CD8-positive, alpha-beta T cell (primary cell): ENCODE measurements at regions of chr1 and their contacts with region 1.

Region 1: GRCh38 chr1:32876341-32877210 is 5.9 kb upstream of the FNDC5 start:
- DNase-seq: peak in 6 of 9 experiments; percentile 25 to 74 (median 68)
- ATAC-seq: peak; percentile 81
- H3K4me3 ChIP-seq: no peak overlapping the region
- H3K4me3 Mint-ChIP-seq: no peak overlapping the region
- H3K27ac ChIP-seq: no peak overlapping the region
- H3K27ac Mint-ChIP-seq: no peak overlapping the region
- H3K4me1 ChIP-seq: no peaks in the 10 kb centered on the region
- H3K4me1 Mint-ChIP-seq: peaks cover 9% of the 10 kb centered on the region
- H3K27me3 ChIP-seq: peaks cover 5 to 21% of the 10 kb centered on the region in 2 experiments
- H3K27me3 Mint-ChIP-seq: peaks cover 47% of the 10 kb centered on the region
- CTCF ChIP-seq: peak; percentile 61

Region 2: DNA sequence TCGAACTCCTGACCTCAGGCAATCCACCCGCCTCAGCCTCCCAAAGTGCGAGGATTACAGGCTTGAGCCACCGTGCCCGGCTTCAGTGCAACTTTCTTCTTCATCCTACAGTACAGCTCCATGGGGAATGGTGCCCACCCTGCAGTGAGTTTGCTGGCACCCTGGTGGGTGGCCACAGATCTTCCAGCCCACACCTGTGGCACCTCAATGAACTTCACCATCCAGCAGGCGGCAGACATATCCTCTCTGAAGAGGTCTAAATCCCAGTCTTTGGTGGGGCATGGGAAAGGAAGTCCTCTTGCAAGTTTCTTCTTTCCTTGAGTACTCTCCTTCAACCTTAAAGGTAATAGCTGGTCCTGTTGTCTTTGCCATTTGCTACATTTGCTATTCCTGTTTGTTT is 355.4 kb before region 1 on chr1:
- CTCF ChIA-PET with region 1: interaction called, 8 read pairs
- POLR2A ChIA-PET with region 1: no interaction called
- intact Hi-C with region 1: loop called in 1 of 2 experiments (anchors 1 kb)
- DNase-seq: no peak
- ATAC-seq: no peak
- H3K4me3 ChIP-seq: no peak overlapping the region
- H3K4me3 Mint-ChIP-seq: peak overlapping the region; percentile 78
- H3K27ac ChIP-seq: no peak overlapping the region
- H3K27ac Mint-ChIP-seq: no peak overlapping the region
- H3K4me1 ChIP-seq: no peaks in the 10 kb centered on the region
- H3K4me1 Mint-ChIP-seq: peaks cover 7% of the 10 kb centered on the region
- H3K27me3 ChIP-seq: peaks cover 0 to 3% of the 10 kb centered on the region in 2 experiments
- H3K27me3 Mint-ChIP-seq: peaks cover 7% of the 10 kb centered on the region
- CTCF ChIP-seq: no peak

Region 3: DNA sequence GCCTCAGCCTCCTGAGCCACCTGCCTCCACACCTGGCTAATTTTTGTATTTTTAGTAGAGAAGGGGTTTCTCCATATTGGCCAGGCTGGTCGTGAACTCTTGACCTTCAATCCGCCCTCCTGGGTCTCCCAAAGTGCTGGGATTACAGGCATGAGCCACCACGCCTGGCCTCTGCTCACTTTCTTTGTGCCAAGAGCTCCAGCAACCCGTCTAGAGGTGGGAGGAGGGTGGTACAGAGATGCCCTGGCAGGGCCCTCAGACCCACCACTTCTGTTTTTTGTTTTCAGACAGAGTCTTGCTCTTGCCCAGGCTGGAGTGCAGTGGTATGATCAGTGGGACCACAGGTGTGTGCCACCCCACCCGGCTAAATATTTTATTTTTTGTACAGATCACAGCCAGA is 167.1 kb before region 1 on chr1:
- CTCF ChIA-PET with region 1: interaction called, 91 read pairs
- POLR2A ChIA-PET with region 1: no interaction called
- intact Hi-C with region 1: loop called (anchors 1 kb)
- DNase-seq: no peak
- ATAC-seq: no peak
- H3K4me3 ChIP-seq: no peak overlapping the region
- H3K4me3 Mint-ChIP-seq: no peak overlapping the region
- H3K27ac ChIP-seq: no peak overlapping the region
- H3K27ac Mint-ChIP-seq: no peak overlapping the region
- H3K4me1 ChIP-seq: no peaks in the 10 kb centered on the region
- H3K4me1 Mint-ChIP-seq: peaks cover 3% of the 10 kb centered on the region
- H3K27me3 ChIP-seq: peaks cover 0 to 3% of the 10 kb centered on the region in 2 experiments
- H3K27me3 Mint-ChIP-seq: peaks cover 11% of the 10 kb centered on the region
- CTCF ChIP-seq: no peak

Region 4: GRCh38 chr1:33055210-33056008 is 178.8 kb after region 1 on chr1:
- CTCF ChIA-PET with region 1: no interaction called
- POLR2A ChIA-PET with region 1: no interaction called
- intact Hi-C with region 1: no loop called
- DNase-seq: peak in 4 of 9 experiments; percentile 12 to 72 (median 56)
- ATAC-seq: peak; percentile 38
- H3K4me3 ChIP-seq: no peak overlapping the region
- H3K4me3 Mint-ChIP-seq: no peak overlapping the region
- H3K27ac ChIP-seq: no peak overlapping the region
- H3K27ac Mint-ChIP-seq: no peak overlapping the region
- H3K4me1 ChIP-seq: no peaks in the 10 kb centered on the region
- H3K4me1 Mint-ChIP-seq: peaks cover 2% of the 10 kb centered on the region
- H3K27me3 ChIP-seq: no peaks in the 10 kb centered on the region
- H3K27me3 Mint-ChIP-seq: peaks cover 6% of the 10 kb centered on the region
- CTCF ChIP-seq: peak; percentile 41

Region 5: DNA sequence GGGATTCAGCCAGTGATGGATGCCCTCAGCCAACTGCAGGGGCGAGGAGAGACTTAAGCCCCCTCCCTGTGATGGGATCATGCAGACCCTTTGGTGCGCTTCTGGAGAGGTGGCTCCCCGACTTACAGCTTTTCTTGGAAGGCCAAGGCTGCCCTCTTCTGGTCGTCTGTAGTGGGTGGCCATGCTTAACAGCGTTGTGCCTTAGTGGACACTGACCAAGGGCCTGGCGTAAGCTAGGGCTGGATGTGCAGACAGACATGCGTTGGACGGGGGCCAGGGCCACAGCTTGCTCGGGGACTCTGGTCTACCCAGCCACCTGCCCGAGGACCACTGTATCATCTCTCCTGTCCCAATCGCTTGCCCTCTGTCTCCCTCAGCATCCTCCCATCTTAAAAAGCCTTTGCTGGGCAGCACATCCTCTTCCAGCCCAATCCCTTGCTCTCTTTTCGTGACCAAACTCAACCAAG is 209.8 kb after region 1 on chr1:
- CTCF ChIA-PET with region 1: interaction called, 13 read pairs
- POLR2A ChIA-PET with region 1: no interaction called
- intact Hi-C with region 1: loop called (anchors 1 kb)
- DNase-seq: peak in 7 of 9 experiments; percentile 17 to 61 (median 37)
- ATAC-seq: peak; percentile 44
- H3K4me3 ChIP-seq: no peak overlapping the region
- H3K4me3 Mint-ChIP-seq: no peak overlapping the region
- H3K27ac ChIP-seq: no peak overlapping the region
- H3K27ac Mint-ChIP-seq: no peak overlapping the region
- H3K4me1 ChIP-seq: peaks cover 27% of the 10 kb centered on the region
- H3K4me1 Mint-ChIP-seq: peaks cover 41% of the 10 kb centered on the region
- H3K27me3 ChIP-seq: no peaks in the 10 kb centered on the region
- H3K27me3 Mint-ChIP-seq: no peaks in the 10 kb centered on the region
- CTCF ChIP-seq: no peak

Region 6: GRCh38 chr1:33181921-33182341 is 305.4 kb after region 1 on chr1 and contains the start of gene TRIM62:
- CTCF ChIA-PET with region 1: no interaction called
- POLR2A ChIA-PET with region 1: no interaction called
- intact Hi-C with region 1: no loop called
- DNase-seq: peak; percentile 48 to 88 (median 74)
- ATAC-seq: peak; percentile 74
- H3K4me3 ChIP-seq: peak within 1 kb of the TSS; percentile 82 to 85
- H3K4me3 Mint-ChIP-seq: peak within 1 kb of the TSS; percentile 88
- H3K27ac ChIP-seq: peak within 1 kb of the TSS in 1 of 2 experiments; percentile 36
- H3K27ac Mint-ChIP-seq: peak within 1 kb of the TSS; percentile 74
- H3K4me1 ChIP-seq: peaks cover 22% of the 10 kb centered on the region
- H3K4me1 Mint-ChIP-seq: peaks cover 31% of the 10 kb centered on the region
- H3K27me3 ChIP-seq: no peaks in the 10 kb centered on the region
- H3K27me3 Mint-ChIP-seq: peaks cover 6% of the 10 kb centered on the region
- CTCF ChIP-seq: no peak
- total RNA-seq, gene TRIM62: 14.3 to 14.8 TPM